ENCODE measurements at regions of chr17 and their contacts with region 1.

Region 1: DNA sequence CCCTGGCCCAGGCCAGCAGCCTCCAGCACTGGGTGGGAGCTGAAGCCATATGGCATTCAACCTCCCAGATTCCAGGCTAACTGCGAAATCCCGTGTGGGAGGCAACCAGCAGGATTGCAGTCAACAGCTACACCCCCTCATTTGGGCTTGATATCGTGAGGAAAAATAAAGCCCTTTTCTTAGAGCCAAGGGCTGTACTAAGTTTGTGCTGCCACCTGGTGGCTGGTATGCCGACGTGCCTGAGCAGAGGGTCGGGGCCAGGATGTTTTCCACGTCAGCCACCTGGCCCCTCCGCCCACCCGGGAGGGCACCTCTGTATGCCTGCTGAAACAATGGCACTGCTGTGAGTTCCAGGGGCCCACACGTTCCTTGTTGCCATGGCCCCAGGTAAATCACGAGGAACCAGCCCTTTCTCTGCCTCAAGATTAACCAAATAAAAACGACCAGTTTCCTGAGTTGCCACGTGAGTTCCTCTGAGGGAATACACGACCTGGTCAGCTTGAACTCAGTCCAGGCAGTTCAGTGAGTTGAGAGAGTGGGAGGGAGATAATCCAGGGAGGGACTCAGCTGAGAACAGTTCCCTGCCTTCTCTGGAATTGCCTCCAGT is 9.0 kb downstream of the TMEM98 start:
- DNase-seq: peak; percentile 20
- ATAC-seq: peak; percentile 74
- H3K4me3 ChIP-seq: no peak overlapping the region
- H3K27ac ChIP-seq: no peak overlapping the region
- H3K4me1 ChIP-seq: no peaks in the 10 kb centered on the region
- H3K27me3 ChIP-seq: peaks cover 5% of the 10 kb centered on the region
- CTCF ChIP-seq: peak; percentile 83

Region 2: DNA sequence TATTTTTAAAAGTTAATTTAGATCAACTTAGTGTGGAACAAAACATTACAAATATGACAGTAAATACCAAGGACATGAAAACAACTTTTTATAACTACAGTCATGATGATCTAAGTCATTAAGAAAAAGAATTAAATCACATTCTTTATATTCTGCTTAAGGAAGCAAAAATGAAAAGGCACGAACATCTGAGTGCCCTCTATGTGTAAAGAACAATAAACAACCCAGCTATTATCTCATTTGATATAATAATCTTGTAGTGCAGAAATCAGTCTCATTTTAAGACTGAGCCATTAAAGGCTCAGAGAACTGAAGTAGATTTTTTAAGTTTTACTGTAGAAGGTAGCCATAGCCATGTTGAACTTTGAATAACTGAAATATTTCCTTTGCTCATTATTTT is 73.4 kb before region 1 on chr17:
- CTCF ChIA-PET with region 1: interaction called, 13 read pairs
- POLR2A ChIA-PET with region 1: no interaction called
- in situ Hi-C with region 1: no loop called
- intact Hi-C with region 1: no loop called
- DNase-seq: no peak
- ATAC-seq: no peak
- H3K4me3 ChIP-seq: no peak overlapping the region
- H3K27ac ChIP-seq: no peak overlapping the region
- H3K4me1 ChIP-seq: no peaks in the 10 kb centered on the region
- H3K27me3 ChIP-seq: peaks cover 48% of the 10 kb centered on the region
- CTCF ChIP-seq: no peak

Region 3: GRCh38 chr17:32997753-32998632 is 61.0 kb after region 1 on chr17:
- CTCF ChIA-PET with region 1: interaction called, 3 read pairs
- POLR2A ChIA-PET with region 1: no interaction called
- in situ Hi-C with region 1: no loop called
- intact Hi-C with region 1: loop called (anchors 5 kb)
- DNase-seq: peak; percentile 50
- ATAC-seq: peak; percentile 92
- H3K4me3 ChIP-seq: peak overlapping the region in 1 of 2 experiments; percentile 2; a peak in 1 of 4 replicates
- H3K27ac ChIP-seq: no peak overlapping the region
- H3K4me1 ChIP-seq: no peaks in the 10 kb centered on the region
- H3K27me3 ChIP-seq: 0 out of 2 replicates have a peak, but pooled peaks cover 2% of the 10 kb centered on the region
- CTCF ChIP-seq: peak; percentile 92

Region 4: DNA sequence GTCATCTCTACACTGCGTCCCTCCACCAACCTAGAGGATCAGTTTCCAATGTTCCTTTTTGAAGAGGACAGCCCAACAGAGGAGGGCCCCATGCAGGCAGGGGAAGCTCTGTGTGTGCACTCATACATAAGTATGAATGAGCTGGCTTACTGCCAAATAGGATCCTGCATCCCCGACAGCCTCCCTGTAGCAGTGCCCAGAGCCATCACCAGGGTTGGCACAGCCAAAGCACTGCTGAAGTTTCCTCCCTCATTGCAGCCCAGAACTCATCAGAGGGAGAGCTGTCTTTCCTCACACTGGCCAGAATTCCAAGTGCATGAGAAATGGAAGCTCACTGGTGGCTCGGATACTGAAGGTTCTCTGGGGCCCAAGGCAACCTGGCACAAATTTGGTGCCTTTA is 241.7 kb after region 1 on chr17:
- CTCF ChIA-PET with region 1: no interaction called
- POLR2A ChIA-PET with region 1: no interaction called
- in situ Hi-C with region 1: no loop called
- intact Hi-C with region 1: no loop called
- DNase-seq: no peak
- ATAC-seq: 0 out of 2 replicates have a peak, but pooled peaks have one; percentile 47
- H3K4me3 ChIP-seq: no peak overlapping the region
- H3K27ac ChIP-seq: no peak overlapping the region
- H3K4me1 ChIP-seq: no peaks in the 10 kb centered on the region
- H3K27me3 ChIP-seq: no peaks in the 10 kb centered on the region
- CTCF ChIP-seq: no peak